ENCODE measurements at regions of chr17 and their contacts with region 1.

Region 1: GRCh38 chr17:57243171-57243948 is 13.0 kb upstream of the MSI2 start:
- DNase-seq: peak; percentile 63 to 89 (median 70)
- ATAC-seq: peak; percentile 98
- H3K4me3 ChIP-seq: no peak overlapping the region
- H3K4me3 Mint-ChIP-seq: no peak overlapping the region
- H3K27ac ChIP-seq: no peak overlapping the region
- H3K27ac Mint-ChIP-seq: no peak overlapping the region
- H3K4me1 ChIP-seq: peaks cover 4% of the 10 kb centered on the region
- H3K4me1 Mint-ChIP-seq: no peaks in the 10 kb centered on the region
- H3K27me3 ChIP-seq: no peaks in the 10 kb centered on the region
- H3K27me3 Mint-ChIP-seq: peaks cover 4% of the 10 kb centered on the region
- CTCF ChIP-seq: peak; percentile 99

Region 2: DNA sequence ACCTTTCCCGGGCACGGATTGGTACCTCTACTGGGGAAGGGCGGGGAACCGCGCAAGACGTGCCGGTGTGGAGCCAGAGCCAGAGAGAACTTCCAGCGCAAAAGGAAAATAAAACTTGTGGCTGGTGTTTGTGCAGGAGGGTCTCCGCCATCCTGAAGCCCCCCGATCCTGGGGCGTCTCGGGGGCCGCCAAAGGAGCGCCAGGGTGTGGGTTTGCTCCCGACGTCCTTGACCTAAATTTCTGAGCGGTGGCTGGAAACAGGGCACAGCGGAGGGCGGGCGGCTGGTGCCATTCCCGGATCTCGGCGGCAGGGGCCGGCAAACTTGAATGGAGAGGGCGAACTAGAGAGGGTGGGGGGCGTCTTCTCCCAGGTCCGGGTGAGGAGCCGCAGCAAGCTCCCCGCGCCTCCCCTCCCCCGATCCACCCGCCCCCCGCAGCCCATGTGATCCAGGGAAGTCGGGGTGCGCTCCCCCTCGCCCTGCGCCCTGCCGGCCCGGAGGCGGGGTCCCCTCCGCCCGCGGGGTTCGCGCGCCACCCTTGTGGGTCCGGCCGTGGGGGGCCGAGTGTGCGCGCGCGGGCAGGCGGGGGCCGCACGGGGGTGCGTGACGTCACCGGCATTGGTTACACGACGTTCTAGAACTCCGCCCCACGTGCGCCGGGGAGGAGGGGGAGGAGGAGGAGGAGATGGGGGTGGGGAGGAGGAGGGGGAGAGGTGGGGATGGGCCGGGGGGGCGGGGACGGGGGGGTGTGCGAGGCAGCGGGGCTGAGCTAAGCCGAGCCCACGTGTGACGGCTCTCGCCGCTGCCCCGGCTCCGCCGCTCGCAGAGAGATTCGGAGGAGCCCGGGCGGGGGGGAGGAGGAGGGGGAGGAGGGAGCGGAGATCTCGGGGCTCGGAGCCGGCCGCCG is 12.7 kb after region 1 on chr17 and contains the start of gene MSI2:
- CTCF ChIA-PET with region 1: interaction called, 79 read pairs
- POLR2A ChIA-PET with region 1: interaction called, 8 read pairs
- intact Hi-C with region 1: loop called in 1 of 2 experiments (anchors 1 kb)
- DNase-seq: peak; percentile 82 to 96 (median 90)
- ATAC-seq: peak; percentile 71
- H3K4me3 ChIP-seq: peak within 1 kb of the TSS; percentile 74
- H3K4me3 Mint-ChIP-seq: peak within 1 kb of the TSS; percentile 99
- H3K27ac ChIP-seq: peak within 1 kb of the TSS; percentile 72 to 82
- H3K27ac Mint-ChIP-seq: peak within 1 kb of the TSS; percentile 98
- H3K4me1 ChIP-seq: peaks cover 35% of the 10 kb centered on the region
- H3K4me1 Mint-ChIP-seq: peaks cover 48% of the 10 kb centered on the region
- H3K27me3 ChIP-seq: no peaks in the 10 kb centered on the region
- H3K27me3 Mint-ChIP-seq: no peaks in the 10 kb centered on the region
- CTCF ChIP-seq: no peak
- total RNA-seq, gene MSI2: 129 to 132 TPM

Region 3: GRCh38 chr17:57279432-57279831 is 36.1 kb after region 1 on chr17:
- CTCF ChIA-PET with region 1: interaction called, 20 read pairs
- POLR2A ChIA-PET with region 1: no interaction called
- intact Hi-C with region 1: loop called (anchors 5 kb)
- DNase-seq: no peak
- ATAC-seq: no peak
- H3K4me3 ChIP-seq: no peak overlapping the region
- H3K4me3 Mint-ChIP-seq: no peak overlapping the region
- H3K27ac ChIP-seq: no peak overlapping the region
- H3K27ac Mint-ChIP-seq: no peak overlapping the region
- H3K4me1 ChIP-seq: peaks cover 35% of the 10 kb centered on the region
- H3K4me1 Mint-ChIP-seq: peaks cover 71% of the 10 kb centered on the region
- H3K27me3 ChIP-seq: no peaks in the 10 kb centered on the region
- H3K27me3 Mint-ChIP-seq: no peaks in the 10 kb centered on the region
- CTCF ChIP-seq: no peak

Region 4: DNA sequence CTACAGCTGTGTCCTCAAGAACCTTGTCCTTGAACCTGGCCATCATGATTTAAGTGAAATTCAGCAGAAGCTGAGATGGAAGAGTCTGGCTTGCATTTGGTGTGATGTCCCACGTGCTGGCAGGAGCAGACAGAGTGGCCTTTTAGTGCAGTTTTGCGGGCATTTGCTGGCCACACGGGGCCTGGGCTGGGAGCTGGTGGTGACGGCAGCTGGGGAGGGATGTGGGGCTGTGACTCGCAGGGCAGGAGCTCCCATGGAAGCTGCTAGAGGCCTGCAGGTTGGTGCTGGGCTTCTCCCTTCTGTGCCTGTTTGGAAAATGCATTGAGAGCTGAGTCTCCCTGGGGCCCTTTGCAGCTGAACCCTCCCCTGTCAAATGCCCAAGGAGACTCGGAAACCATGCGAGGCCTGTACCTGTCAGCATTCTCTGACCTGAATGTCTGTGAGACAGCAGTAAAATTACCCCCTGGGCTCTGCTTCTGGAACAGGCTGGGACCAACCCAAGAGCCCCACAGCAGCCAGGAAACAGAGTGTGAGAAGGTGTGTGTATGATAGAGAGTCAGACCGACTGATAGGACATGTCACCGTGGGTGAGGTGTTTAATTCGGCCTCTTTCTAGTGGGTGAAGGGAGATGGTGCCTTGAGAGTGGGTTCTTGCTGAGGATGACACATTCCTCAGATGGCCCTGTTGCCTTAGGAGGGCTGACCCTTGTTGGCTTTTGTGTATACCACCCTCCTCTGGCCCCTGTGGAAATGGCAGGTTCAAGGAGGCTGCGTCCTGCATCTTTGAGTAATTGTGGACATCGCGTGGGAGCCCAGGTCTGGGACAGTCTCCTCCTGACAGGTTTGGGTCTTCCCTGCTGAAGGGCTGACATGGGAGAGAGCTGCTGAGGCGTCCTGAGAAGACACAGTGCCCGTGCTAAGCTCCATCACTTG is 158.5 kb after region 1 on chr17:
- CTCF ChIA-PET with region 1: interaction called, 9 read pairs
- POLR2A ChIA-PET with region 1: interaction called, 6 read pairs
- intact Hi-C with region 1: loop called in 1 of 2 experiments (anchors 5 kb)
- DNase-seq: no peak
- ATAC-seq: no peak
- H3K4me3 ChIP-seq: no peak overlapping the region
- H3K4me3 Mint-ChIP-seq: no peak overlapping the region
- H3K27ac ChIP-seq: no peak overlapping the region
- H3K27ac Mint-ChIP-seq: no peak overlapping the region
- H3K4me1 ChIP-seq: peaks cover 10% of the 10 kb centered on the region
- H3K4me1 Mint-ChIP-seq: peaks cover 45% of the 10 kb centered on the region
- H3K27me3 ChIP-seq: no peaks in the 10 kb centered on the region
- H3K27me3 Mint-ChIP-seq: no peaks in the 10 kb centered on the region
- CTCF ChIP-seq: no peak

Region 5: GRCh38 chr17:57518587-57519581 is 275.5 kb after region 1 on chr17:
- CTCF ChIA-PET with region 1: interaction called, 4 read pairs
- POLR2A ChIA-PET with region 1: interaction called, 3 read pairs
- intact Hi-C with region 1: loop called in 1 of 2 experiments (anchors 1 kb)
- DNase-seq: no peak
- ATAC-seq: no peak
- H3K4me3 ChIP-seq: no peak overlapping the region
- H3K4me3 Mint-ChIP-seq: no peak overlapping the region
- H3K27ac ChIP-seq: no peak overlapping the region
- H3K27ac Mint-ChIP-seq: no peak overlapping the region
- H3K4me1 ChIP-seq: no peaks in the 10 kb centered on the region
- H3K4me1 Mint-ChIP-seq: peaks cover 9% of the 10 kb centered on the region
- H3K27me3 ChIP-seq: no peaks in the 10 kb centered on the region
- H3K27me3 Mint-ChIP-seq: no peaks in the 10 kb centered on the region
- CTCF ChIP-seq: no peak

Region 6: GRCh38 chr17:57747221-57748017 is 504.1 kb after region 1 on chr17:
- CTCF ChIA-PET with region 1: interaction called, 18 read pairs
- POLR2A ChIA-PET with region 1: interaction called, 5 read pairs
- intact Hi-C with region 1: loop called (anchors 1 kb)
- DNase-seq: peak in 10 of 14 experiments; percentile 8 to 74 (median 22)
- ATAC-seq: peak; percentile 58
- H3K4me3 ChIP-seq: no peak overlapping the region
- H3K4me3 Mint-ChIP-seq: no peak overlapping the region
- H3K27ac ChIP-seq: no peak overlapping the region
- H3K27ac Mint-ChIP-seq: no peak overlapping the region
- H3K4me1 ChIP-seq: no peaks in the 10 kb centered on the region
- H3K4me1 Mint-ChIP-seq: no peaks in the 10 kb centered on the region
- H3K27me3 ChIP-seq: no peaks in the 10 kb centered on the region
- H3K27me3 Mint-ChIP-seq: peaks cover 9% of the 10 kb centered on the region
- CTCF ChIP-seq: peak; percentile 79

Measured in CD4-positive, alpha-beta T cell (primary cell).